ENCODE measurements at regions of chr21 and their contacts with region 1.

Region 1: GRCh38 chr21:32940079-32941014 is 85.4 kb upstream of the OLIG2 start:
- DNase-seq: peak; percentile 67
- H3K4me3 Mint-ChIP-seq: no peak overlapping the region
- H3K27ac Mint-ChIP-seq: no peak overlapping the region
- H3K4me1 Mint-ChIP-seq: no peaks in the 10 kb centered on the region
- H3K27me3 Mint-ChIP-seq: peaks cover 50% of the 10 kb centered on the region
- CTCF ChIP-seq: peak; percentile 55

Region 2: DNA sequence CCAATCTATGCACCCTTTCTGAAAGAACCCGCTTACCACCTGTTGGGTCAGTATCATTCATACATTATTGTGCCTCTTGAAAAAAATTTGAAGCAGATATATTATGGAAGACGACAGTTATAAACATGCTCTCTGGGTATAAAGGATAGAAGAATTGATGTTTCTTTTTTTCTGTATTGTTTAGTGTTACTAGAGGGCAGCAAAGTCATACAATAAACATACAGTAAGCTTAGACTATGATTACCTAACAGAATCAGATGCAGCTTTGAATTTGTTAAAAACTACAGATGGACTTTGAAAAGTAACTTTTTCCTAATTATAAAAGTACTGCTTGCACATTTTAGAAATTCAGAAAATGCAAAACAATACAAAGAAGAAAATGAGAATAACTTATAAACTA is 157.6 kb before region 1 on chr21:
- CTCF ChIA-PET with region 1: no interaction called
- POLR2A ChIA-PET with region 1: no interaction called
- intact Hi-C with region 1: no loop called
- DNase-seq: no peak
- H3K4me3 Mint-ChIP-seq: no peak overlapping the region
- H3K27ac Mint-ChIP-seq: no peak overlapping the region
- H3K4me1 Mint-ChIP-seq: no peaks in the 10 kb centered on the region
- H3K27me3 Mint-ChIP-seq: no peaks in the 10 kb centered on the region
- CTCF ChIP-seq: no peak

Region 3: DNA sequence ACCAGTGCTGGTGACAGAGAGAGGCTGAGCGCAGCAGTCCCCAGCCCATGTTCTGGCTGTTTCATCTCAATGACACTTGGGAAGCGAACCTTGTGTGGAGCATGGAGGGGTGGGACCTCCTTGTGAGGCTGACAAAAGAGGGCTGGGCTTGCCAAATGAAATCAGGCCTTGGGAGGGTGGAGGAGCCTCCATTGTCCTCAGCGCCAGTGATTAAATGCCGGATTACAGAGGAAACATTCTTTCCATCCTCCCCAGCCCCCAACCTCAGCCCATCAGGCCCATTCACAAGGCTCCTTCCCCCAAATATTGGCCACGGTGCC is 105.5 kb before region 1 on chr21:
- CTCF ChIA-PET with region 1: interaction called, 17 read pairs
- POLR2A ChIA-PET with region 1: interaction called, 4 read pairs
- intact Hi-C with region 1: no loop called
- DNase-seq: no peak
- H3K4me3 Mint-ChIP-seq: no peak overlapping the region
- H3K27ac Mint-ChIP-seq: no peak overlapping the region
- H3K4me1 Mint-ChIP-seq: no peaks in the 10 kb centered on the region
- H3K27me3 Mint-ChIP-seq: peaks cover 29% of the 10 kb centered on the region
- CTCF ChIP-seq: no peak

Region 4: GRCh38 chr21:32916522-32917099 is 23.7 kb before region 1 on chr21:
- CTCF ChIA-PET with region 1: interaction called, 13 read pairs
- POLR2A ChIA-PET with region 1: no interaction called
- intact Hi-C with region 1: no loop called
- DNase-seq: peak; percentile 29
- H3K4me3 Mint-ChIP-seq: no peak overlapping the region
- H3K27ac Mint-ChIP-seq: no peak overlapping the region
- H3K4me1 Mint-ChIP-seq: no peaks in the 10 kb centered on the region
- H3K27me3 Mint-ChIP-seq: peaks cover 66% of the 10 kb centered on the region
- CTCF ChIP-seq: no peak

Region 5: DNA sequence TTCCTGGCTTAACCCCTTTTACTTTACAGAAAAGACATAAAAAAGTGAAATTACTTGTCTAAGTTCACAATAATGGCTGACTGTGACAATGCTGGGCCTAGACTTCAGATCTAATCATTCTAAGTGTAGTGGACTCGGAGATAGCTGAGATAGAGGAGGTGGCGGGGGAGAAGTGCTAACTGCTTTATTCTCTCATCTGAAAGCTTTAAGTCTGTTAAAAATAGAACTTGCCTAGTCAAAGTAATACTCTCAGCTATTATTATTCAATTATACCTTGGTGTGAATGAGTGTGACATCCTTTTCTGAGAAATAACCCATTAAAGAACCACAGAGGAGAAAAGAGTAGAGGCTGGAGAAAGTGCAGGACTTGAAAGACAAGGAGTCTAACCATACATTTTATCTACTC is 10.7 kb before region 1 on chr21:
- CTCF ChIA-PET with region 1: interaction called, 21 read pairs
- POLR2A ChIA-PET with region 1: no interaction called
- intact Hi-C with region 1: no loop called
- DNase-seq: no peak
- H3K4me3 Mint-ChIP-seq: no peak overlapping the region
- H3K27ac Mint-ChIP-seq: no peak overlapping the region
- H3K4me1 Mint-ChIP-seq: no peaks in the 10 kb centered on the region
- H3K27me3 Mint-ChIP-seq: peaks cover 26% of the 10 kb centered on the region
- CTCF ChIP-seq: no peak

Region 6: DNA sequence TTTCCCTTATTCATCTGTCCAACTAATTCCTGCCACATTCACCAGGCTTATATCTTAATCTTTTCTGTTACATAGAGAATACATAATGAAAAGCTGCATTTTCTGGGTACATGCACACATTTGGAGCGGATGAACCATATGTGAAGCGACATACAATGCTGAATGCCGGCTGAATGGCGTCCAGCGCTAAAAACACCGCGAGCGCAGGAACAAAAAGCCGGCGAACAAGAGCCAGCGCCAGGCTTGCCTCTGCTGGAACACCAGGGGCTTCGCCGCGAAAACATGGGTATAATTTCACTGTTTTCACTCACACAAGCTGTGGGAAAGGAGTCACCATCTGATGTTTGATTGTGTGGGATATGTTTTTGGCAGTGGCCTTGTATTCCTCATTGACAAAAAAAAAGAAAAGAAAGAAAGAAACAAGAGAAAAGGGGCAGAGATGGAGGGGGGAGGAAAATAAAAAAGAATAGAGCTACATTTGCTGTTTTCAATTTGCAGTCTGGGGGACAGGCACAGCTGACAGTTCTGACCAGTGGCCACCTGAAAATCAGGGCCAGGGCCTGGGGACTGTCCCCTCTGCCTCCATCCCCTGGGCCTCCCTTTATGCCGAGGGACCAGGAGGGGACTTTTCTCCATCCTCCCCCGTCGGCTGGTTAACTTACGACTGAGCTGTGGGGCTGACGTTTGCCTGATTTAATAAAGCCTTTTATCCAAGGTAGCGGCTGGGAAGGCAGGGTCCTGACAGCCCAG is 15.1 kb after region 1 on chr21:
- CTCF ChIA-PET with region 1: interaction called, 14 read pairs
- POLR2A ChIA-PET with region 1: no interaction called
- intact Hi-C with region 1: no loop called
- DNase-seq: no peak
- H3K4me3 Mint-ChIP-seq: no peak overlapping the region
- H3K27ac Mint-ChIP-seq: no peak overlapping the region
- H3K4me1 Mint-ChIP-seq: no peaks in the 10 kb centered on the region
- H3K27me3 Mint-ChIP-seq: peaks cover 100% of the 10 kb centered on the region
- CTCF ChIP-seq: no peak

Region 7: DNA sequence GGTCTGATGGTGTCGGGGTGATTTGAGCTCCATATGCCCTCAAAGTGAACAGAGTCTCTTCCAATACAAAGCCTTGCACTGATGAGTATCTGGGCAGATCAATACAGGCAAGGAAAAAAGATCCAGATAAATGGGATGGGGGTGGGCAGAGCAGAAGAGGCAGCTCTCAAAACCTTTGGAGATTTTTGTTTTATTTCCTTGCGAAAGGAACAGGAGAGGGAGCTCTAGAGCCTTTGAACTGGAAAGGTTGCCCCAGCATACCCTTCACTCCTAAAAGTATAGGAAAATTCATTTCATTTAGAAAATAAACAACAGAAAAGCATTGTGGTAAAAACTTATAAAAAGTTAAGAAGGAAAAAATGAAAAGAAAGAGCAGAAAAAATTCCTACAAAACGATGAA is 54.0 kb after region 1 on chr21:
- CTCF ChIA-PET with region 1: interaction called, 9 read pairs
- POLR2A ChIA-PET with region 1: no interaction called
- intact Hi-C with region 1: loop called (anchors 5 kb)
- DNase-seq: peak; percentile 40
- H3K4me3 Mint-ChIP-seq: no peak overlapping the region
- H3K27ac Mint-ChIP-seq: no peak overlapping the region
- H3K4me1 Mint-ChIP-seq: peaks cover 7% of the 10 kb centered on the region
- H3K27me3 Mint-ChIP-seq: peaks cover 64% of the 10 kb centered on the region
- CTCF ChIP-seq: peak; percentile 56

Region 8: DNA sequence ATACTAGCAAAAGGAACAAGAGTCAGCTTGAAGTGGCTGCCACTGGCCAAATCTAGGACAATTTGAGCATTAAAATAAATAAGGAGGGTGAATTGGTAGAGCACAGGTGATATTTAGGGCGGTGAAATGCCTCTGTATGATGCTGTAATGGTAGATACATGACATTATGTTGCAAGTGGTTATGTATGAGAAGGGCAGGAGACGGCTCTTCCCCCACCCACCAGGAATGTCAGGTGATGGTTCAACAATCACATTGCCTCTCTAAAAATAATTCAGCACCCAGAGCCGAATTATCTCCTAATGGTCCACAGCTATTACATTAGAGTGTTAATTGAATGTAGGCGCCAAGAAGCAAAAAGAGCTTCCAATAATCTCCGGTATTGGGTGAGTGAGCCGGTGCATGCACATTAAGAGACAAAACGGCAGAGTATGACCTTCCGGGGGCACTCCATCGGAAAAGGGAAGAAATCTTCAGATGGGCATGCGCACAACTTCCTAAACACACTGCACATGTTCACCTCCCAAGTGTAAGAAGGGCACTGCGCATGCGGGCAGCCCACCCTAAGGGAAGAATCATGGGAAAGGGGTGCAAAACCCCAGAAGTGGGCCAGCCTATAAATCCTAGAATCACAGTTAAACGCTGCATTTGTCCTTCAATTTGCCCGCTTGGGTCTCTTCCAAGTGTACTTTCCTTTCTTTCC is 377.6 kb after region 1 on chr21:
- CTCF ChIA-PET with region 1: no interaction called
- POLR2A ChIA-PET with region 1: no interaction called
- intact Hi-C with region 1: no loop called
- DNase-seq: no peak
- H3K4me3 Mint-ChIP-seq: no peak overlapping the region
- H3K27ac Mint-ChIP-seq: no peak overlapping the region
- H3K4me1 Mint-ChIP-seq: no peaks in the 10 kb centered on the region
- H3K27me3 Mint-ChIP-seq: peaks cover 13% of the 10 kb centered on the region
- CTCF ChIP-seq: no peak